ENCODE measurements at regions of chr6 and their contacts with region 1.

Region 1: GRCh38 chr6:141483598-141484061 is 649.1 kb upstream of the GJE1 start:
- DNase-seq: peak; percentile 69
- ATAC-seq: peak; percentile 97
- H3K4me3 Mint-ChIP-seq: peak overlapping the region; percentile 66
- H3K27ac Mint-ChIP-seq: peak overlapping the region; percentile 93
- H3K4me1 Mint-ChIP-seq: peaks cover 34% of the 10 kb centered on the region
- H3K27me3 Mint-ChIP-seq: no peaks in the 10 kb centered on the region

Region 2: GRCh38 chr6:141153563-141153962 is 330.1 kb before region 1 on chr6:
- CTCF ChIA-PET with region 1: no interaction called
- POLR2A ChIA-PET with region 1: no interaction called
- intact Hi-C with region 1: loop called in 1 of 2 experiments (anchors 2 kb)
- DNase-seq: peak; percentile 26
- ATAC-seq: peak; percentile 90
- H3K4me3 Mint-ChIP-seq: no peak overlapping the region
- H3K27ac Mint-ChIP-seq: peak overlapping the region; percentile 13
- H3K4me1 Mint-ChIP-seq: peaks cover 21% of the 10 kb centered on the region
- H3K27me3 Mint-ChIP-seq: no peaks in the 10 kb centered on the region

Region 3: GRCh38 chr6:141309295-141309694 is 174.3 kb before region 1 on chr6:
- CTCF ChIA-PET with region 1: no interaction called
- POLR2A ChIA-PET with region 1: no interaction called
- intact Hi-C with region 1: loop called in 1 of 2 experiments (anchors 5 kb)
- DNase-seq: peak; percentile 13
- ATAC-seq: peak; percentile 65
- H3K4me3 Mint-ChIP-seq: no peak overlapping the region
- H3K27ac Mint-ChIP-seq: no peak overlapping the region
- H3K4me1 Mint-ChIP-seq: peaks cover 9% of the 10 kb centered on the region
- H3K27me3 Mint-ChIP-seq: peaks cover 4% of the 10 kb centered on the region

Region 4: GRCh38 chr6:141326426-141326825 is 157.2 kb before region 1 on chr6:
- CTCF ChIA-PET with region 1: no interaction called
- POLR2A ChIA-PET with region 1: interaction called, 3 read pairs
- intact Hi-C with region 1: loop called (anchors 1 to 2 kb)
- DNase-seq: peak; percentile 73
- ATAC-seq: peak; percentile 100
- H3K4me3 Mint-ChIP-seq: no peak overlapping the region
- H3K27ac Mint-ChIP-seq: no peak overlapping the region
- H3K4me1 Mint-ChIP-seq: peaks cover 19% of the 10 kb centered on the region
- H3K27me3 Mint-ChIP-seq: peaks cover 3% of the 10 kb centered on the region

Region 5: GRCh38 chr6:141496496-141496895 is 12.9 kb after region 1 on chr6:
- CTCF ChIA-PET with region 1: interaction called, 14 read pairs
- POLR2A ChIA-PET with region 1: no interaction called
- intact Hi-C with region 1: no loop called
- DNase-seq: no peak
- ATAC-seq: no peak
- H3K4me3 Mint-ChIP-seq: no peak overlapping the region
- H3K27ac Mint-ChIP-seq: no peak overlapping the region
- H3K4me1 Mint-ChIP-seq: no peaks in the 10 kb centered on the region
- H3K27me3 Mint-ChIP-seq: no peaks in the 10 kb centered on the region